ENCODE measurements at regions of chr7 and their contacts with region 1.

Region 1: DNA sequence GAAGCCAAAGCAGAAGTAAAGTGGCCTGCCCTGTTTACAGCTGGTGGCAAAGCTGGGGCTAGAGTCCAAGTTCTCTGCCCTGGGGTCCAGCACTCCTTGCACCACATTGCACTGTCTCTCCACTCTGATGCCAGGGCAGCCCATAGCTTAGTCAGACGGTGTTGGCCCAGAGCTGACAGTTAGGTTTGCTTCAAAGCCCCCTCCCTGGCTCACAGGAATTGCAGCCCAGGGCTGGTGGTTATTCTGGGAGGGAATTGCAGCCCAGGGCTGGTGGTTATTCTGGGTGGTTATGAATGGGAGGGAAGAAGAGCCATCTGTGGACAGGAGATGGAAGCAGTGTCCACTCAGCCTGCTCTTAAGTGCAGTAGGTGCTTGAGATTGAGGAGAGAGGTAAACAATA is 88.9 kb downstream of the SCRN1 start:
- DNase-seq: no peak
- H3K4me3 ChIP-seq: no peak overlapping the region
- H3K27ac ChIP-seq: no peak overlapping the region
- H3K4me1 ChIP-seq: no peaks in the 10 kb centered on the region
- H3K27me3 ChIP-seq: peaks cover 0 to 5% of the 10 kb centered on the region in 2 experiments
- CTCF ChIP-seq: no peak
- POLR2A ChIP-seq: no peak

Region 2: GRCh38 chr7:29811586-29811985 is 89.2 kb before region 1 on chr7:
- CTCF ChIA-PET with region 1: no interaction called
- POLR2A ChIA-PET with region 1: interaction called, 10 read pairs
- dilution Hi-C with region 1: no loop called
- intact Hi-C with region 1: no loop called
- DNase-seq: no peak
- H3K4me3 ChIP-seq: no peak overlapping the region
- H3K27ac ChIP-seq: no peak overlapping the region
- H3K4me1 ChIP-seq: peaks cover 3% of the 10 kb centered on the region
- H3K27me3 ChIP-seq: peaks cover 38 to 46% of the 10 kb centered on the region in 2 experiments
- CTCF ChIP-seq: no peak
- POLR2A ChIP-seq: no peak

Region 3: DNA sequence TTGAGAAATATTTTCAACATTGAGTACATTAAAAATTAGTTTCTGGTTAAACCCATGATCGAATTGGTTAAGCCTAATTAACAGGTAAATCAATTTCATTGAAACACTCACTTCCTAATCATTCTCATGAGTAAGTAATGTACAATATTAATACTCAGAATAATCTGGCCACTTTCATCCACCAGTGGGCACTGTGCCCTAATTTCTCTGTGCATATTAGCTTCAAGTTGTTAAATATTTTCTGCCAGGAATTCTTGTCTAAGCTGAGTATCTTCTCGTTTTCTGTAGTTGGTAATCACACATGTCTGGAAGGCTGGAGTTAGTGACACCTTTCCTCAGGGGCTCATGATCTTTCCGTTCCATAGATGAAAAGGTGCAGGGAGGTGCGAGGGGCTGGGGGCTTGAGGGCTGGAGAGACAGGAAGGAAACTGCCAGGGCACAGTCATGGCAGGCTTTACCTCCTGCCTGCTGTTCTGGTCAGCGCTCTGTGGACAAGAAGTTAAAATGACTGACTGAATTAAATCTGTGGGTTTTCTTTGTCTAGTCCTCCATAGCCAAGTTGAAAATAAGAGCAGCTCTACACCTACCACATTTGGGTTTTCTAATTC is 22.6 kb before region 1 on chr7:
- CTCF ChIA-PET with region 1: no interaction called
- POLR2A ChIA-PET with region 1: no interaction called
- dilution Hi-C with region 1: no loop called
- intact Hi-C with region 1: no loop called
- DNase-seq: peak; percentile 74
- H3K4me3 ChIP-seq: no peak overlapping the region
- H3K27ac ChIP-seq: no peak overlapping the region
- H3K4me1 ChIP-seq: peaks cover 2% of the 10 kb centered on the region
- H3K27me3 ChIP-seq: peaks cover 5% of the 10 kb centered on the region in 2 experiments
- CTCF ChIP-seq: peak; percentile 50 to 58
- POLR2A ChIP-seq: no peak

Measured in endothelial cell of umbilical vein (primary cell).